ENCODE measurements at regions of chr12 and their contacts with region 1.

Region 1: DNA sequence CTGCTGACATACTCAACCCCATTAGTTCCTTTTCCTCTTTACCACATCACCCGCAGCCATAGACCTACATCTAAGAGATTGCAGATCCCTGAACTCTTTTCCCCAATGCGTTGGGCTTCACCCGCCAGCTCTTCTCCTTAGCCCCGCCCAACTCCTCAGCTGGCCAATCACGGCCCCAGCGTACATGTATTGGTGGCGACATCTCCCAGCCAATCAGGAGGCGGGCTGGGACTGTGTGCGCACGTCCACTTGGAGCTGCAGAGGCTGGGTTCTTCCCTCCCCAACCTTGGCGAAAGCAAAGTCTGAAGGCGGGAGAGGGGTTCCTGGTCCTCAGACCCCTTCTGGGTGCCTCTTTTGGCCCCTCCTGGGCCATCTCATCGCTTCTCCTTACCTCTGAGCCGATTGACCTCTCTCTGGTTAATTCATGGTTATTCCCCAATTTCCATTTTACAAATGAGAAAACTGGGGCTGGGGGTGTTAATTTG is 11.0 kb downstream of the PDE1B start:
- DNase-seq: peak; percentile 95
- ATAC-seq: peak; percentile 100
- H3K4me3 Mint-ChIP-seq: peak overlapping the region; percentile 71
- H3K27ac Mint-ChIP-seq: peak overlapping the region; percentile 85
- H3K4me1 Mint-ChIP-seq: peaks cover 22% of the 10 kb centered on the region
- H3K27me3 Mint-ChIP-seq: peaks cover 3% of the 10 kb centered on the region
- CTCF ChIP-seq: no peak

Region 2: GRCh38 chr12:54549774-54550451 is 10.5 kb before region 1 on chr12:
- CTCF ChIA-PET with region 1: interaction called, 3 read pairs
- POLR2A ChIA-PET with region 1: interaction called, 16 read pairs
- intact Hi-C with region 1: no loop called
- DNase-seq: peak; percentile 63
- ATAC-seq: peak; percentile 87
- H3K4me3 Mint-ChIP-seq: peak overlapping the region; percentile 77
- H3K27ac Mint-ChIP-seq: no peak overlapping the region
- H3K4me1 Mint-ChIP-seq: peaks cover 34% of the 10 kb centered on the region
- H3K27me3 Mint-ChIP-seq: peaks cover 8% of the 10 kb centered on the region
- CTCF ChIP-seq: no peak

Region 3: GRCh38 chr12:54589964-54590363 is 29.5 kb after region 1 on chr12:
- CTCF ChIA-PET with region 1: no interaction called
- POLR2A ChIA-PET with region 1: no interaction called
- intact Hi-C with region 1: no loop called
- DNase-seq: no peak
- ATAC-seq: no peak
- H3K4me3 Mint-ChIP-seq: no peak overlapping the region
- H3K27ac Mint-ChIP-seq: no peak overlapping the region
- H3K4me1 Mint-ChIP-seq: peaks cover 5% of the 10 kb centered on the region
- H3K27me3 Mint-ChIP-seq: peaks cover 51% of the 10 kb centered on the region
- CTCF ChIP-seq: no peak

Region 4: GRCh38 chr12:54641554-54641953 is 81.1 kb after region 1 on chr12:
- CTCF ChIA-PET with region 1: no interaction called
- POLR2A ChIA-PET with region 1: no interaction called
- intact Hi-C with region 1: no loop called
- DNase-seq: no peak
- ATAC-seq: no peak
- H3K4me3 Mint-ChIP-seq: no peak overlapping the region
- H3K27ac Mint-ChIP-seq: no peak overlapping the region
- H3K4me1 Mint-ChIP-seq: no peaks in the 10 kb centered on the region
- H3K27me3 Mint-ChIP-seq: peaks cover 18% of the 10 kb centered on the region
- CTCF ChIP-seq: no peak

Measured in activated CD8-positive, alpha-beta T cell treated with anti-CD3 and anti-CD28 coated beads for 36 hours (primary cell).